Colonic mucosa (tissue), 4 donors: ENCODE measurements at regions of chr5 and their contacts with region 1.

Region 1: GRCh38 chr5:122896598-122897282 is 51.3 kb downstream of the SNX24 start:
- DNase-seq: no peak
- H3K4me3 ChIP-seq: no peak overlapping the region
- H3K27ac ChIP-seq: no peak overlapping the region
- H3K4me1 ChIP-seq: no peaks in the 10 kb centered on the region
- H3K27me3 ChIP-seq: no peaks in the 10 kb centered on the region
- CTCF ChIP-seq: peak; percentile 54

Region 2: GRCh38 chr5:123344816-123345426 is 448.2 kb after region 1 on chr5:
- intact Hi-C with region 1: loop called (anchors 10 kb)
- DNase-seq: no peak
- H3K4me3 ChIP-seq: no peak overlapping the region
- H3K27ac ChIP-seq: no peak overlapping the region
- H3K4me1 ChIP-seq: no peaks in the 10 kb centered on the region
- H3K27me3 ChIP-seq: no peaks in the 10 kb centered on the region
- CTCF ChIP-seq: peak; percentile 50

Region 3: GRCh38 chr5:123371575-123372179 is 474.9 kb after region 1 on chr5:
- intact Hi-C with region 1: loop called (anchors 10 kb)
- DNase-seq: peak; percentile 69
- H3K4me3 ChIP-seq: no peak overlapping the region
- H3K27ac ChIP-seq: no peak overlapping the region
- H3K4me1 ChIP-seq: no peaks in the 10 kb centered on the region
- H3K27me3 ChIP-seq: no peaks in the 10 kb centered on the region
- CTCF ChIP-seq: peak; percentile 60